Naive thymus-derived CD4-positive, alpha-beta T cell (primary cell): ENCODE measurements at regions of chr19 and their contacts with region 1.

Region 1: DNA sequence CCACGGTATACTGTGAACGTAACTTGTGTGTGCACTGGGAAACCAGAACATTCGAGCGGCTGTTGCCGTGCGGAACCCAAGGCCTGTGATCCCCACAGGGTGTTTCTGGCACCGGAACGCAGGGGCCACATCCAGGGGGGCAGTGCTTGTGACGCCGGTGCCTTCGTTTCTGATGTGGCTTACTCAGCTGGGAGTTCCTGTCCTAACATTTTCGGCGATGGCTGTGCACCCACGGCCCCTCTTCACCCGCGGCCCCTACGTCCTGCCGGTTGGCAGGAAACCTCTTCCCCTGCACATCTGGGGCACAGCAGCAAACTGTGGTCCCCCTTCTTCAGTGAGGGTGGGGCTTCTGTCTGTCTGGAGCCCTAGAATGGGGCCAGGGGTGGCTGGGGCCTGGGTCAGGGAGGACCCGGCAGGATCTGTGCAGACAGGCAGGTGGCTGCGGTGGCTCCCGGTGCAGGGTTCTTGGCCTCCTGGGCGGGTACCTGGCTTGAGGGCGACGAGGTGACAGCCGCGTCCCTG is 26.2 kb downstream of the CSNK1G2 start:
- DNase-seq: peak in 6 of 9 donors; percentile 35 to 54 (median 51)
- ATAC-seq: peak; percentile 67
- H3K4me3 ChIP-seq: peak overlapping the region; percentile 5
- H3K4me3 Mint-ChIP-seq: peak overlapping the region; percentile 20 to 82 (median 76)
- H3K27ac ChIP-seq: peak overlapping the region; percentile 56
- H3K27ac Mint-ChIP-seq: peak overlapping the region; percentile 58 to 92 (median 88)
- H3K4me1 ChIP-seq: peaks cover 0 to 15% of the 10 kb centered on the region in 2 donors
- H3K4me1 Mint-ChIP-seq: peaks cover 12 to 24% (median 16%) of the 10 kb centered on the region in 7 donors
- H3K27me3 ChIP-seq: no peaks in the 10 kb centered on the region
- H3K27me3 Mint-ChIP-seq: no peaks in the 10 kb centered on the region

Region 2: GRCh38 chr19:1942078-1942933 is 24.8 kb before region 1 on chr19:
- CTCF ChIA-PET with region 1: interaction called, 3 read pairs
- POLR2A ChIA-PET with region 1: interaction called, 3 read pairs
- intact Hi-C with region 1: loop called in 1 of 2 experiments (anchors 2 kb)
- DNase-seq: peak; percentile 58 to 84 (median 78)
- ATAC-seq: peak; percentile 51
- H3K4me3 ChIP-seq: peak overlapping the region; percentile 94
- H3K4me3 Mint-ChIP-seq: peak overlapping the region; percentile 91 to 100 (median 96)
- H3K27ac ChIP-seq: peak overlapping the region; percentile 98
- H3K27ac Mint-ChIP-seq: peak overlapping the region; percentile 90 to 99 (median 97)
- H3K4me1 ChIP-seq: peaks cover 21 to 30% of the 10 kb centered on the region in 2 donors
- H3K4me1 Mint-ChIP-seq: peaks cover 22 to 44% (median 30%) of the 10 kb centered on the region in 7 donors
- H3K27me3 ChIP-seq: no peaks in the 10 kb centered on the region
- H3K27me3 Mint-ChIP-seq: peaks cover 0 to 2% (median 0%) of the 10 kb centered on the region in 5 donors